ENCODE measurements at regions of chr17 and their contacts with region 1.

Region 1: GRCh38 chr17:42019509-42020404 is at the start of gene NKIRAS2:
- DNase-seq: peak; percentile 93
- ATAC-seq: peak; percentile 77
- H3K4me3 ChIP-seq: peak within 1 kb of the TSS; percentile 65 to 87 (median 73)
- H3K4me3 Mint-ChIP-seq: peak within 1 kb of the TSS; percentile 100
- H3K27ac ChIP-seq: peak within 1 kb of the TSS; percentile 28 to 78
- H3K27ac Mint-ChIP-seq: peak within 1 kb of the TSS; percentile 83
- H3K4me1 ChIP-seq: peaks cover 46 to 53% of the 10 kb centered on the region in 2 donors
- H3K4me1 Mint-ChIP-seq: peaks cover 64% of the 10 kb centered on the region
- H3K27me3 ChIP-seq: no peaks in the 10 kb centered on the region
- H3K27me3 Mint-ChIP-seq: no peaks in the 10 kb centered on the region
- CTCF ChIP-seq: peak; percentile 89
- total RNA-seq, gene NKIRAS2: 22.0 and 23.7 TPM in 2 replicates

Region 2: DNA sequence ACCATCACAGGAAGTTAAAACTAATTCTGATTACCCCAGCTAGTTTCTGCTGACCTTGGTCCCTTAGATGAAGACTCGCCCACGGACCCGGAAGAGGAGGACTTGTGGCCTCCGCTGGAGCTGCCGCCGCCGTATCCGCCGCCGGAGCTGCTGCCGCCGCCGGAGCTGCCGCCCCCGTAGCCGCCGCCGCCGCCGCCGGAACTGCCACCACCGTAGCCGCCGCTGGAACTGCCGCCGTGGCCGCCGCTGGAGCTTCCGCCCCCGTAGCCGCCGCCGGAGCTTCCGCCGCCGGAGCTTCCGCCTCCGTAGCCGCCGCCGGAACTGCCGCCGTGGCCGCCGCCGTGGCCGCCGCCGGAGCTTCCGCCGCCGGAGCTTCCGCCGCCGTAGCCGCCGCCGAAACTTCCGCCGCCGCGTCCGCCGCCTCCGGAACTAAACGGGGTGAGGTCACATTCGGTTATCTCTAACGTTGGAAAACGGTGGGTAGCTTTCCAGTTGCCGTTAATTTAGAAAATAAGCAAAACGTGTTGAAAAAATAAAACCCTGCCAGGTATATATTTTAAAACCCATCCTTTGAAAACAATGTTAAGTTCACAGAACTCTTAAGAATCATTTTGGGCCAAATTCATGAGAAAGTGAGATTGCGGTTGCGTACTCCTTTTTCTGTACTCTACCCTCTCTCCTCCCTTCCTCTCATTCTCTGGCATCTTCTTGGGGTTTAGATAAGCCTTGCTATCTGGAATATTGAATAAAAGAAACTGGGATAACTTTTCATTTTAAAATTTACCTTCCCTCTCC is 1200.8 kb before region 1 on chr17:
- CTCF ChIA-PET with region 1: no interaction called
- POLR2A ChIA-PET with region 1: no interaction called
- intact Hi-C with region 1: loop called (anchors 5 kb)
- DNase-seq: peak; percentile 95
- ATAC-seq: peak; percentile 91
- H3K4me3 ChIP-seq: peak overlapping the region; percentile 50 to 95 (median 71)
- H3K4me3 Mint-ChIP-seq: peak overlapping the region; percentile 89
- H3K27ac ChIP-seq: peak overlapping the region; percentile 68 to 86
- H3K27ac Mint-ChIP-seq: peak overlapping the region; percentile 85
- H3K4me1 ChIP-seq: peaks cover 8 to 13% of the 10 kb centered on the region in 2 donors
- H3K4me1 Mint-ChIP-seq: peaks cover 18% of the 10 kb centered on the region
- H3K27me3 ChIP-seq: peaks cover 0 to 6% (median 0%) of the 10 kb centered on the region in 4 experiments
- H3K27me3 Mint-ChIP-seq: peaks cover 16% of the 10 kb centered on the region
- CTCF ChIP-seq: no peak

Region 3: DNA sequence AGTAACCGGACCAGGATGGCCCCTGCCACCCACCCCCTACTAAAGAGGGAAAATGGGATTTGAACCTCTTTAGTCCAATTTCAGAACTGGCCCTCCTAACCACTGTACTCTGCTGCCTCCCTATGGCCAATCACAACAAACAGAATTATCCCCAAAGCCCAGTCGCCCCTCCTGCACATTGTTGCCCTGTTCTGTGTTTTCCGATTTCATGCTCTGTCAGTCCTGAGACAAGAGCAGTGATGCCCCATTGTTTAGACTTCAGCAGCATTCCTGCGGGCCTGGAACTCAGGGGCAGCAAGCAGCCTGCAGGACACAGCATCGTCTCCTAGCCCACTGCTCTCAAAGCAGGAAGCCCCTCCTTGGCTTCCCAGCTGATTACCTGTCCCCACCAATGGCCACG is 134.0 kb before region 1 on chr17:
- CTCF ChIA-PET with region 1: no interaction called
- POLR2A ChIA-PET with region 1: no interaction called
- intact Hi-C with region 1: no loop called
- DNase-seq: no peak
- ATAC-seq: no peak
- H3K4me3 ChIP-seq: no peak overlapping the region
- H3K4me3 Mint-ChIP-seq: no peak overlapping the region
- H3K27ac ChIP-seq: no peak overlapping the region
- H3K27ac Mint-ChIP-seq: no peak overlapping the region
- H3K4me1 ChIP-seq: no peaks in the 10 kb centered on the region
- H3K4me1 Mint-ChIP-seq: peaks cover 3% of the 10 kb centered on the region
- H3K27me3 ChIP-seq: no peaks in the 10 kb centered on the region
- H3K27me3 Mint-ChIP-seq: no peaks in the 10 kb centered on the region
- CTCF ChIP-seq: no peak

Region 4: DNA sequence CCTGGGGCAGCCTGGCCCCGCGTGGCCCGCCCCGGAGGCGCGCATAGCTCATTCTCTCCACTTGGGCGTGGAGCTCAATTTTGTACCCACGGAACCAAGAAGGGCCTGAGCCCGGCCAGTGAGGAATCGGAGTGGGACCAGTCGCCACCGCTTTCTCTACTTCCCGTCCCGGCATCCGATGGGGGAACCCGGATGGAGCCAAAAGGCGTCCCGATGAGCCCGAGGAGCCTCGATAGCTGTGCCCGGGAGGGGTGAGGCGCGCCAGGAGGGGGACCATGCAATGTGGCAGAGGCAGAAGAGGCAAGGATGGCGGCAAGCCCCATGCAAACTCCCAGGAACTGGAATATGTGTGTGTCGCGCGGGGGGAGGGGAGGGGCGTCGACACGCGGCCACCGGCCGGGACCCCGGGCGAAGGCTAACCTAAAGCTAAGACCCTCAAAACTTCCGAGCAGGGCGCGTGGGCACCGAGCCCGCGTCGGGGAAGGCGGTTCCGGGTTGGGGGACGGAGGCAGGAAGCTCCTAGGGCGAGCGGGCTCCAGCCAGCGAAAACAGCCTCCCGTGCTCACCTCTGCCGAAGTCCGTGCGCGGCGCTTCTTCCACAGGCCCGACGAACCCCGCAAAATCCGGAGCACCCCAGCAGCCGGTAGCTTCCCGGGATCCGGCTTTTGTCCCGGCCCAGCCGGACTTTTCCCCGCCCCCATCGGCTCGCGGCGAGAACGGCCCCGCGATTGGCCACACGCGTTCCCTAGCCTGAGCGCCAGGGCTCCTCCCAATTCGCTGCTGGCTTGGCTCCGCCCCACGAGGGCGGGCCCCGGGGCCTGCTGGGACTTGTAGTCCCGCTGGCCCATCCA is 101.2 kb before region 1 on chr17 and contains the start of gene ACLY:
- CTCF ChIA-PET with region 1: interaction called, 3 read pairs
- POLR2A ChIA-PET with region 1: no interaction called
- intact Hi-C with region 1: loop called (anchors 2 kb)
- DNase-seq: peak; percentile 95
- ATAC-seq: peak; percentile 99
- H3K4me3 ChIP-seq: peak within 1 kb of the TSS; percentile 78 to 99 (median 98)
- H3K4me3 Mint-ChIP-seq: peak within 1 kb of the TSS; percentile 91
- H3K27ac ChIP-seq: peak within 1 kb of the TSS; percentile 62 to 81
- H3K27ac Mint-ChIP-seq: peak within 1 kb of the TSS; percentile 89
- H3K4me1 ChIP-seq: peaks cover 15 to 21% of the 10 kb centered on the region in 2 donors
- H3K4me1 Mint-ChIP-seq: peaks cover 40% of the 10 kb centered on the region
- H3K27me3 ChIP-seq: no peaks in the 10 kb centered on the region
- H3K27me3 Mint-ChIP-seq: no peaks in the 10 kb centered on the region
- CTCF ChIP-seq: no peak
- total RNA-seq, gene ACLY: 85.3 and 91.5 TPM in 2 replicates

Region 5: GRCh38 chr17:41930009-41930832 is 89.5 kb before region 1 on chr17 and contains the start of gene ODAD4:
- CTCF ChIA-PET with region 1: interaction called, 3 read pairs
- POLR2A ChIA-PET with region 1: interaction called, 5 read pairs
- intact Hi-C with region 1: loop called (anchors 1 kb)
- DNase-seq: peak; percentile 95
- ATAC-seq: peak; percentile 99
- H3K4me3 ChIP-seq: peak within 1 kb of the TSS; percentile 46 to 92 (median 81)
- H3K4me3 Mint-ChIP-seq: peak within 1 kb of the TSS; percentile 96
- H3K27ac ChIP-seq: peak within 1 kb of the TSS; percentile 60 to 83
- H3K27ac Mint-ChIP-seq: peak within 1 kb of the TSS; percentile 88
- H3K4me1 ChIP-seq: peaks cover 10 to 32% of the 10 kb centered on the region in 2 donors
- H3K4me1 Mint-ChIP-seq: peaks cover 30% of the 10 kb centered on the region
- H3K27me3 ChIP-seq: no peaks in the 10 kb centered on the region
- H3K27me3 Mint-ChIP-seq: no peaks in the 10 kb centered on the region
- CTCF ChIP-seq: no peak
- total RNA-seq, gene ODAD4: 0.27 and 0.56 TPM in 2 replicates

Region 6: GRCh38 chr17:41944943-41945342 is 74.8 kb before region 1 on chr17:
- CTCF ChIA-PET with region 1: no interaction called
- POLR2A ChIA-PET with region 1: no interaction called
- intact Hi-C with region 1: no loop called
- DNase-seq: no peak
- ATAC-seq: no peak
- H3K4me3 ChIP-seq: no peak overlapping the region
- H3K4me3 Mint-ChIP-seq: no peak overlapping the region
- H3K27ac ChIP-seq: no peak overlapping the region
- H3K27ac Mint-ChIP-seq: no peak overlapping the region
- H3K4me1 ChIP-seq: no peaks in the 10 kb centered on the region
- H3K4me1 Mint-ChIP-seq: no peaks in the 10 kb centered on the region
- H3K27me3 ChIP-seq: no peaks in the 10 kb centered on the region
- H3K27me3 Mint-ChIP-seq: peaks cover 3% of the 10 kb centered on the region
- CTCF ChIP-seq: no peak

Region 7: GRCh38 chr17:41972571-41973411 is 47.0 kb before region 1 on chr17:
- CTCF ChIA-PET with region 1: interaction called, 90 read pairs
- POLR2A ChIA-PET with region 1: interaction called, 5 read pairs
- intact Hi-C with region 1: no loop called
- DNase-seq: peak; percentile 60
- ATAC-seq: peak; percentile 95
- H3K4me3 ChIP-seq: no peak overlapping the region
- H3K4me3 Mint-ChIP-seq: peak overlapping the region; percentile 38
- H3K27ac ChIP-seq: peak overlapping the region; percentile 23 to 47
- H3K27ac Mint-ChIP-seq: peak overlapping the region; percentile 76
- H3K4me1 ChIP-seq: peaks cover 12 to 48% of the 10 kb centered on the region in 2 donors
- H3K4me1 Mint-ChIP-seq: peaks cover 45% of the 10 kb centered on the region
- H3K27me3 ChIP-seq: no peaks in the 10 kb centered on the region
- H3K27me3 Mint-ChIP-seq: no peaks in the 10 kb centered on the region
- CTCF ChIP-seq: no peak

Region 8: GRCh38 chr17:42120770-42121769 is 101.3 kb after region 1 on chr17 and contains the start of gene KAT2A:
- CTCF ChIA-PET with region 1: interaction called, 80 read pairs
- POLR2A ChIA-PET with region 1: interaction called, 11 read pairs
- intact Hi-C with region 1: loop called (anchors 1 kb)
- DNase-seq: peak; percentile 82
- ATAC-seq: peak; percentile 89
- H3K4me3 ChIP-seq: peak within 1 kb of the TSS in 4 of 5 experiments; percentile 40 to 79 (median 58)
- H3K4me3 Mint-ChIP-seq: peak within 1 kb of the TSS; percentile 72
- H3K27ac ChIP-seq: no peak within 1 kb of the TSS
- H3K27ac Mint-ChIP-seq: peak within 1 kb of the TSS; percentile 59
- H3K4me1 ChIP-seq: peaks cover 14 to 26% of the 10 kb centered on the region in 2 donors
- H3K4me1 Mint-ChIP-seq: peaks cover 28% of the 10 kb centered on the region
- H3K27me3 ChIP-seq: no peaks in the 10 kb centered on the region
- H3K27me3 Mint-ChIP-seq: no peaks in the 10 kb centered on the region
- CTCF ChIP-seq: no peak
- total RNA-seq, gene KAT2A: 61.6 and 66.3 TPM in 2 replicates

Region 9: DNA sequence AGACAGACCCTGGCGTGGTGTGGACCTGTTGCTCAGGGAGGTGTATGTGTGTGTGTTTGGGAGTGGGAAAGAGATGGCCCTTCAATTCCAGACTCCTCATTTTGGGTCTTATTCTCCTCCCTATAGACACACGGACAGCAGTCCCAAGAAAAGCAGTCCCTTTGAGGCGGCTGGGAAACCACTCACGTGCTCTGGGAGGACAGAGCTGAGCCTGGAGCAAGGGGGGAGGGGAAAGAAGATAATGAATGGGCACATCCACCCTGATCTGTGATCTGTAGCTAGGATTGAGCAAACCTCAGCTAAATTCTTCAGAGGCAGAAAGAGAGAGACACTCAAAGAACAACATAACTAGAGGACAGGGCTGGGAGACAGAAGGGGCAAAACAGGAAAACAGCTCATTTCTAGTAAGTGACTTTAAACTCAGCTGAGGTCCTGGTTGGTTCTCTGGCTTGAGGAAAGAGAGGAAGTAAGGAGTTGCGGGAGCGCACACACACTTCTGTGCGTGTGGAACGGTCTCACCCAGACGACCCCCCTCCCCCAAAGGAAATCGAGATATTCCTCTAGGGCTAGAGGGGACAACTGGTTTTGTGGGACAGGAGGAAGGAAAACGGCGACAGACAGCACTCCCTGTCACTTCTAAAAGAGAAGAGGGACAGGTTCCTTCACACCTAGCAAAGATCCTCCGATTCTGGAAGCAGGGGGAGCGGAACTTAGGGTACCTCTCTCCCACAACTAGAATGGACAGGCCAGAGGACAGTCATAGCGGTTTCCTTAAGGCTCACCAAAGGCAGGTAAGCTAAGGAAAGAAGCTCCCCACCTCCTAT is 134.4 kb after region 1 on chr17:
- CTCF ChIA-PET with region 1: interaction called, 3 read pairs
- POLR2A ChIA-PET with region 1: interaction called, 3 read pairs
- intact Hi-C with region 1: loop called (anchors 1 kb)
- DNase-seq: no peak
- ATAC-seq: no peak
- H3K4me3 ChIP-seq: peak overlapping the region; percentile 91 to 100 (median 99)
- H3K4me3 Mint-ChIP-seq: peak overlapping the region; percentile 94
- H3K27ac ChIP-seq: peak overlapping the region; percentile 74 to 94
- H3K27ac Mint-ChIP-seq: peak overlapping the region; percentile 96
- H3K4me1 ChIP-seq: peaks cover 14 to 23% of the 10 kb centered on the region in 2 donors
- H3K4me1 Mint-ChIP-seq: peaks cover 34% of the 10 kb centered on the region
- H3K27me3 ChIP-seq: no peaks in the 10 kb centered on the region
- H3K27me3 Mint-ChIP-seq: no peaks in the 10 kb centered on the region
- CTCF ChIP-seq: no peak

Region 10: DNA sequence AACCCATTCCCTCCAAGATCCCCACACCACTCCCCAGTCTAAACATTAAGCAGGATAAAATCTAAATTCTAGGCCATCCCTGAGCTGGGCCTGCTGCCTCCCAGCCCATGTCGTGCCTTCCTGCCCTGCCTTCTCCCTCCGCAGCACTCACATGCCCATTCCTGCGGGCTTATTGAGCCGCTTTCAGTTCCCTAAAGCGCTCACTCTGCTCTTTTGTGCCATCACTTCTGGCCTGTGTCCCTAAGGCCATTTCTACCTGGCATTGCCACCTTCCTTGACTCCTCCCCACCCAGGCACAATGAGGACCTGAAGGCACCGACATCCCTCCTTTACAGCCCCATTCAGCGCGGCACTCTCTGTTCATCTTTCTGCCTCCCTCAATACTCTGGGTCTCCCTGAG is 148.1 kb after region 1 on chr17:
- CTCF ChIA-PET with region 1: no interaction called
- POLR2A ChIA-PET with region 1: no interaction called
- intact Hi-C with region 1: no loop called
- DNase-seq: no peak
- ATAC-seq: no peak
- H3K4me3 ChIP-seq: no peak overlapping the region
- H3K4me3 Mint-ChIP-seq: no peak overlapping the region
- H3K27ac ChIP-seq: no peak overlapping the region
- H3K27ac Mint-ChIP-seq: no peak overlapping the region
- H3K4me1 ChIP-seq: no peaks in the 10 kb centered on the region
- H3K4me1 Mint-ChIP-seq: no peaks in the 10 kb centered on the region
- H3K27me3 ChIP-seq: no peaks in the 10 kb centered on the region
- H3K27me3 Mint-ChIP-seq: no peaks in the 10 kb centered on the region
- CTCF ChIP-seq: no peak

Measured in B cell (primary cell).